ENCODE measurements at regions of chr14 and their contacts with region 1.

Region 1: GRCh38 chr14:90758028-90758889 is 58.0 kb downstream of the TTC7B start:
- DNase-seq: peak; percentile 93
- H3K4me3 Mint-ChIP-seq: peak overlapping the region; percentile 74
- H3K27ac Mint-ChIP-seq: peak overlapping the region; percentile 78
- H3K4me1 Mint-ChIP-seq: peaks cover 6% of the 10 kb centered on the region
- H3K27me3 Mint-ChIP-seq: peaks cover 27% of the 10 kb centered on the region

Region 2: DNA sequence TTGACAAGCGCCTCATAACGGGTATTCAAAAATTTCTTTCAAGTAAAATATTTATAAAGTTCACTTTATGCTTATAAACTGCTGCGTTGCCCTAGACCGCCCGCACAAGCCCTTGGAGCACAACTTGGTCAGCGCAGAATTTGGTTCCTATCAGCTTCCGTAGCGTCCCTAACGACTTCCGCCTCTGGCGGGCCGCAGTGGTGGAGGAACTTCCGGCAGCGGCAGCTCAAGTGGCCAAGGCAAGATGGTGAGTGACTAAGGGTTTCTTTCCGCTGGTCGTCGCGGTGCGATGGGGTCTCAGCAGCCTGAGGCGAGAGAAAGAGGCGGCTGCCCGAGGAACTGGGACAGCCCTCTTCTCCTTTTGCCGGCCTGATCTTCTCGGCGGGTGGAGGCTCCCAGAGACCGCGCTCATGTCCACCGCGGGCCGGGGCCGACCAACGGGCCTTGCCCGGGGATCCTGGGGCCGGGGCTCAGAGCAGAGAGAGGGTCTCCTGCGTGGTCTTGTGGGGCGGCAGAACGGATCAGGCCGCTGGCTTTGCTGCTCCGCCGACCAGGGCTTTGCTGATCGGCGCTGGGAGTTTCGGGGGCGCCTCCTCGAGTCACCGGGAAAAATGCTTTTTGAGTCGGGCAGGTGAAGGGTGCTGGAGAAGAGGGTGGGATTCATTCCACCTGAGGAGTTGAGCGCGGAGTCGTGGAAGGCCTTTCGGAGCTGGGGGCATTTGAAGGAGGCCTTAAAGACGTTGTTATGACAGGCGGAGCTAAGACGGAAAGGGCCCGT is 501.7 kb before region 1 on chr14 and contains the start of gene PSMC1:
- intact Hi-C with region 1: loop called (anchors 2 kb)
- DNase-seq: peak; percentile 83
- H3K4me3 Mint-ChIP-seq: peak within 1 kb of the TSS; percentile 99
- H3K27ac Mint-ChIP-seq: peak within 1 kb of the TSS; percentile 93
- H3K4me1 Mint-ChIP-seq: peaks cover 22% of the 10 kb centered on the region
- H3K27me3 Mint-ChIP-seq: peaks cover 6% of the 10 kb centered on the region
- total RNA-seq, gene PSMC1: 171 and 176 TPM in 2 replicates

Region 3: DNA sequence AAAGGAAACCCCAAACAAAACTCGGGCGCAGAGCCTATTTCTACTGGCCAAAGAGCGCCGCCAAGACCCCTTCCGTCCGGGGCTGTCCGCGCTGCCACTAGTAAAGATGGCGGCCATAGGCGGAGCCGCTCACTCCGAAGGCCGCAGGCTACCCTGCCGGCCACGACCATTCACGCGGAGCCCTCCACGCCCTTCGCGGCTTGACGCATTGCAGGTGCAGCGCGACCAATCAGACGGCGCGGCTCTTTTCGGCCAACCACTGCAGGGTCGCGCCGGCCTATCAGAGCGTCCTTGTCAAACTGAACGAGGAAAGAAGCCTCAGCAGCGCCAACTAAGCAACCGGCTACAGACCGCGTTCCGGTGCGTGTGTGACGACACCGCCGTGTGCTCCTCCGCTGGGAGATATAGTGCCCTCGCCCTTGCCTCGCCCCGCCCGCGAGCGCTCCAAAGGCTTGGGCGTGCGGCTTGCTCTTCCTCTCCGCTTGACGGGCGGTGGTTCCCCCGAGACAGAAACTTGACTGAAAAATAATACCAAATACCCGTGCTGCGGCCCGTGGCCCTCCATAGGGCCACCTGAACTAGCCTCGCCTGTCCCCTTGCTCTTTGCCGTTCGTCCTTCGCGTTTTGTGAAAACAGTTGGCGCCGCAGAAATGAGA is 375.1 kb before region 1 on chr14:
- intact Hi-C with region 1: loop called (anchors 5 kb)
- DNase-seq: peak; percentile 98
- H3K4me3 Mint-ChIP-seq: no peak overlapping the region
- H3K27ac Mint-ChIP-seq: no peak overlapping the region
- H3K4me1 Mint-ChIP-seq: peaks cover 6% of the 10 kb centered on the region
- H3K27me3 Mint-ChIP-seq: peaks cover 1% of the 10 kb centered on the region

Region 4: GRCh38 chr14:90419200-90419599 is 339.1 kb before region 1 on chr14:
- intact Hi-C with region 1: no loop called
- DNase-seq: no peak
- H3K4me3 Mint-ChIP-seq: no peak overlapping the region
- H3K27ac Mint-ChIP-seq: no peak overlapping the region
- H3K4me1 Mint-ChIP-seq: no peaks in the 10 kb centered on the region
- H3K27me3 Mint-ChIP-seq: peaks cover 3% of the 10 kb centered on the region

Region 5: DNA sequence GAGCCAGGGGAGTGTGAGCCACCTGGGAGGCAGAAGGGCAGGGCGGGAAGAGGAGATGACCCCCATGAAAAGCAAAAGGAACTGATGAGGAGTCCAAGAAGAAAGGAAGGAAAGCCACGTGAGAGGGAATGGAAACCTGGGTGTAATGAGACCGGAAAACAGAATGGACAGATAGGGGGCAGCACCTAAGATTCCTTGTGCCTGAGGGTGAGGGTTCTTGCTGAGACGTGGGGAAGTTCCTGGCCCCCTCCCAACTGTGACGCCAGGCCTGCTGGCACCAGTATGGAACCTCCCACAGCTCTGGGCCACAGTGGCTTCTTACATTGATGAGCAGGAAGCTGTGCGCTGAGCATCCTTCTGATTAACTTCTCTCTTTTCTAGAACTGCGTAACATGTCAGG is 27.2 kb after region 1 on chr14:
- intact Hi-C with region 1: no loop called
- DNase-seq: no peak
- H3K4me3 Mint-ChIP-seq: no peak overlapping the region
- H3K27ac Mint-ChIP-seq: no peak overlapping the region
- H3K4me1 Mint-ChIP-seq: no peaks in the 10 kb centered on the region
- H3K27me3 Mint-ChIP-seq: no peaks in the 10 kb centered on the region

Region 6: GRCh38 chr14:90827916-90828610 is 69.8 kb after region 1 on chr14:
- intact Hi-C with region 1: loop called (anchors 1 kb)
- DNase-seq: peak; percentile 91
- H3K4me3 Mint-ChIP-seq: peak overlapping the region; percentile 76
- H3K27ac Mint-ChIP-seq: peak overlapping the region; percentile 88
- H3K4me1 Mint-ChIP-seq: peaks cover 28% of the 10 kb centered on the region
- H3K27me3 Mint-ChIP-seq: peaks cover 5% of the 10 kb centered on the region

Region 7: DNA sequence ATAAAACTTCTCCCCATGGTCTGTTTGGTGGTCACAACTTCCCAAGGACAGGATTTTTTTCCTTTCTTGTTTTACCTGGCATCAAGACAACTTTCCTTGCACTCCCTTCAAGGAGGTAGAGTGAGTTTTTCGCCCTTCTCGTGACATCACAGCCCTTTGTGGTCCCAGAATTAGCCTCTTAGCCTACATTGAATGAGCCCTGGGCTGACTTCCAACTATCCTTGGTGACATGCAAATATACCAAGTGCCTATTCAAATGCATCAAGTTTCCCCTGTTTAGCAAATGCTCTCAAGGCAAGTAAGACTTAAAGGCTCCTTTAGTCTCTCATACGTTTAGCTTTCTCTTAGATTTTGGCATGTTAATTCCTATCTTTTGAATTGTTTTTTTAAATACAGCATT is 1072.5 kb after region 1 on chr14:
- intact Hi-C with region 1: no loop called
- DNase-seq: no peak
- H3K4me3 Mint-ChIP-seq: no peak overlapping the region
- H3K27ac Mint-ChIP-seq: peak overlapping the region; percentile 30
- H3K4me1 Mint-ChIP-seq: peaks cover 42% of the 10 kb centered on the region
- H3K27me3 Mint-ChIP-seq: no peaks in the 10 kb centered on the region

Region 8: GRCh38 chr14:92039719-92040430 is 1281.6 kb after region 1 on chr14 and contains the start of gene TRIP11:
- intact Hi-C with region 1: loop called (anchors 5 kb)
- DNase-seq: peak; percentile 94
- H3K4me3 Mint-ChIP-seq: peak within 1 kb of the TSS; percentile 93
- H3K27ac Mint-ChIP-seq: peak within 1 kb of the TSS; percentile 98
- H3K4me1 Mint-ChIP-seq: peaks cover 38% of the 10 kb centered on the region
- H3K27me3 Mint-ChIP-seq: no peaks in the 10 kb centered on the region
- total RNA-seq, gene TRIP11: 36.5 and 44.4 TPM in 2 replicates